ENCODE measurements at regions of chr3 and their contacts with region 1.

Region 1: DNA sequence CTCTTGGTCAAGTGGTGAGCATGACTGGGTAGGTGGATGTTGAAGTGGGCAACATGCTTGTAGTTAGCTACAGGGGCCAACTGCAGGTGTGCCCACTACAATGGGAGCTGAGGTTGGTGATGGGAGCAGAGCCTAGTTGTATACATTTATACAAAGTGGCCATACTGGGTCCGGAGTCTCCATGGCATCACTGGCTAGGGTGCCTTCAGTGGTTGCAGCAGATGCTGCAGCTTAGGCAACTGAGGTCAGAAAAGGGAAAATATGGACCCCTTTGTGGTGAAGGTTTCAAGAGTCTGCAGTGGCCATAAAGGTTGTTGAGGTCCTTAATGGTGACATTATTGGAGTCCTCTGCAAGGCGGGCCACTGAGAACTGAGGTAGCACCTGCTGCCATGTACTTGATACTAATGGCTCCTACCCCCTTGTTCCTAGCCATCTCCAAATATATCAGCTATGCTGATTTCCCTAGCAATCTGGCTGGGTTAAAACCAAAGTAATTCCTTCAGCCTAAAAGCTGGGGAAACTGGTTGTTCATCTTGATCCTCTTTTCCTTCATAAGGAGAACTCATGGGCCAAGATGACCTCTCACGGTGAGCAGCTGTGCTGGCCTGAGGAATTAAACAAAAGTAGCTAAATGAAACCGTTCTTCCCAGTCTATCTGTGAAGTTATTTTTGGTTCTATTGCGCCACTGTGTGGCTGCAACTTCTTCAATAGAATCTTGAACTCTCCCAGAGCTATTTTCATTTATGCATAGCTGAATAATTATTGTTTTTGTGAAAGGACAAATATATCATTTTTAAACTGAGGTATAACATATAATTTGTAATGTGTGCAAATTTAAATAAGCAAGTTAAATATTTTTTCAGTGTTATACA is 76.0 kb upstream of the PLSCR4 start:
- DNase-seq: no peak
- ATAC-seq: peak; percentile 66
- H3K4me3 Mint-ChIP-seq: no peak overlapping the region
- H3K27ac Mint-ChIP-seq: no peak overlapping the region
- H3K4me1 Mint-ChIP-seq: no peaks in the 10 kb centered on the region
- H3K27me3 Mint-ChIP-seq: no peaks in the 10 kb centered on the region
- CTCF ChIP-seq: 0 out of 2 replicates have a peak, but pooled peaks have one; percentile 22

Region 2: GRCh38 chr3:146065573-146066006 is 261.3 kb before region 1 on chr3:
- CTCF ChIA-PET with region 1: interaction called, 32 read pairs
- POLR2A ChIA-PET with region 1: no interaction called
- DNase-seq: no peak
- ATAC-seq: no peak
- H3K4me3 Mint-ChIP-seq: no peak overlapping the region
- H3K27ac Mint-ChIP-seq: no peak overlapping the region
- H3K4me1 Mint-ChIP-seq: no peaks in the 10 kb centered on the region
- H3K27me3 Mint-ChIP-seq: no peaks in the 10 kb centered on the region
- CTCF ChIP-seq: peak; percentile 66

Region 3: GRCh38 chr3:146160964-146161662 is 165.8 kb before region 1 on chr3 and contains the start of gene PLOD2:
- CTCF ChIA-PET with region 1: interaction called, 12 read pairs
- POLR2A ChIA-PET with region 1: no interaction called
- DNase-seq: peak; percentile 74
- ATAC-seq: peak; percentile 75
- H3K4me3 Mint-ChIP-seq: peak within 1 kb of the TSS; percentile 83
- H3K27ac Mint-ChIP-seq: peak within 1 kb of the TSS; percentile 97
- H3K4me1 Mint-ChIP-seq: peaks cover 68% of the 10 kb centered on the region
- H3K27me3 Mint-ChIP-seq: peaks cover 16% of the 10 kb centered on the region
- CTCF ChIP-seq: no peak
- total RNA-seq, gene PLOD2: 36.6 to 40.7 TPM (median 39.3 TPM) in 3 replicates

Region 4: GRCh38 chr3:146222204-146223046 is 104.5 kb before region 1 on chr3:
- CTCF ChIA-PET with region 1: interaction called, 34 read pairs
- POLR2A ChIA-PET with region 1: no interaction called
- DNase-seq: peak; percentile 46
- ATAC-seq: peak; percentile 98
- H3K4me3 Mint-ChIP-seq: no peak overlapping the region
- H3K27ac Mint-ChIP-seq: peak overlapping the region; percentile 48
- H3K4me1 Mint-ChIP-seq: peaks cover 20% of the 10 kb centered on the region
- H3K27me3 Mint-ChIP-seq: no peaks in the 10 kb centered on the region
- CTCF ChIP-seq: no peak

Region 5: GRCh38 chr3:146359841-146360240 is 32.9 kb after region 1 on chr3:
- CTCF ChIA-PET with region 1: no interaction called
- POLR2A ChIA-PET with region 1: no interaction called
- DNase-seq: no peak
- ATAC-seq: no peak
- H3K4me3 Mint-ChIP-seq: no peak overlapping the region
- H3K27ac Mint-ChIP-seq: no peak overlapping the region
- H3K4me1 Mint-ChIP-seq: no peaks in the 10 kb centered on the region
- H3K27me3 Mint-ChIP-seq: peaks cover 9% of the 10 kb centered on the region; the same call in 1 of the 2 replicates
- CTCF ChIP-seq: no peak

Region 6: DNA sequence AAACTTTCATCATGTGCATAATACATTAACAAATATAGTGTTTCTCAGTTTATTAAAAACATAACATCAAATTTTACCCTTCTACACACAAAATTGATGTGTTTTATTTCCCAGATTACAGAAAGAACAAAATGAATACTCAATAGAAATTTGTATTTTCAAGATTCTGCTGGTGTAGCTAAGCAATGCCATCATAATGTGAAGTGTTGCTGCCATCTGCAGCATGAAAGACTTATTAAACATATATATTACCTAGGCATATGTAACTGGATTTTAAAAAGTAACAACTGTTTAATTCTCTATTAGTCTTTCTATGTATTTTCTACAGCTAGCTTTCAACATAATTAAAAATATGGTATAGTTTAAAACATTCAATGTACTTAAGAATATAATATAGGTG is 250.8 kb after region 1 on chr3:
- CTCF ChIA-PET with region 1: interaction called, 13 read pairs
- POLR2A ChIA-PET with region 1: no interaction called
- DNase-seq: no peak
- ATAC-seq: no peak
- H3K4me3 Mint-ChIP-seq: no peak overlapping the region
- H3K27ac Mint-ChIP-seq: no peak overlapping the region
- H3K4me1 Mint-ChIP-seq: peaks cover 21% of the 10 kb centered on the region
- H3K27me3 Mint-ChIP-seq: no peaks in the 10 kb centered on the region
- CTCF ChIP-seq: no peak

Measured in WTC11 (cell line).